ENCODE measurements at regions of chr5 and their contacts with region 1.

Region 1: DNA sequence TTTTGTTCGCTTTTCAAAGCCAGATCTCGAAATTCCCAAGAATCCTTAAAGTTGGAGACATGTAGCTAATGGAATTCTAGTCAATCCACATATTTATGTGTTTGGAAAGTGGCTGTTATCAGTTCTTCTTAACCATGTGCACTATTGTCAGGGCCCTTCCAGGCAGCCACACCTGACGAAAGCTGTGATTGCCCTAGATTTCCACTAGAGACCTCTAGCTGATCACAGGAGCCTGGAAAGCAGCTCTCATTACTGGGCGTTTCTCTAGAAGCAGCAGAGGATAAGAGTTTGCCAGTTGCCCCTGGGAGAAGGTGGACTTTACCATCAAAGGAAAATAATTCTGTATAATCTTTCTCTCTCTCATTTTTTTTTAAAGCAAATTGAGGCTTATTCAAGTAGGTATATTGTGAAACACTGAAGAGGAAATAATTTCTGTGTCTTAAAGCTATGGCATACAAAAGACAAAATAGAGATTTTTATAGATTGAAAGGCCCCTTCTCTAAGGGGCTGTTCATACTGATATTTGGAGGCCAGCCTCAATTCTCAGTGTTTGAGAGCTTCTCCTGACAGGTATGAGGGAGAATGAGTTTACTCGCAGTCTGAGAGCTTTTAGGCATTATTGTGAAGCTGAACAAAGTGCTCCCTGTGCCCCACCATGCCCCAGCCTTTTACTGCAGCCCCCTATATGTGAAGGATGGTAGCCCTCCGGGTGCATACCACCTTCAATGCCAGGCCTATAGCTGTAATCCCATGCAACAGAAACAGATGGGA is 405.4 kb upstream of the ACTBL2 start:
- DNase-seq: peak; percentile 73
- H3K4me3 ChIP-seq: no peak overlapping the region
- H3K27ac ChIP-seq: no peak overlapping the region
- H3K4me1 ChIP-seq: no peaks in the 10 kb centered on the region
- H3K27me3 ChIP-seq: no peaks in the 10 kb centered on the region
- CTCF ChIP-seq: peak; percentile 53 to 66
- POLR2A ChIP-seq: no peak

Region 2: GRCh38 chr5:57841676-57842363 is 46.2 kb before region 1 on chr5:
- CTCF ChIA-PET with region 1: interaction called, 7 read pairs
- POLR2A ChIA-PET with region 1: no interaction called
- dilution Hi-C with region 1: no loop called
- intact Hi-C with region 1: loop called (anchors 2 kb)
- DNase-seq: peak; percentile 96
- H3K4me3 ChIP-seq: no peak overlapping the region
- H3K27ac ChIP-seq: peak overlapping the region; percentile 90
- H3K4me1 ChIP-seq: peaks cover 66% of the 10 kb centered on the region
- H3K27me3 ChIP-seq: no peaks in the 10 kb centered on the region
- CTCF ChIP-seq: no peak
- POLR2A ChIP-seq: no peak

Region 3: GRCh38 chr5:58188262-58188651 is 300.2 kb after region 1 on chr5:
- CTCF ChIA-PET with region 1: interaction called, 14 read pairs
- POLR2A ChIA-PET with region 1: no interaction called
- dilution Hi-C with region 1: no loop called
- intact Hi-C with region 1: no loop called
- DNase-seq: peak; percentile 75
- H3K4me3 ChIP-seq: no peak overlapping the region
- H3K27ac ChIP-seq: peak overlapping the region; percentile 39
- H3K4me1 ChIP-seq: peaks cover 18% of the 10 kb centered on the region
- H3K27me3 ChIP-seq: no peaks in the 10 kb centered on the region
- CTCF ChIP-seq: no peak
- POLR2A ChIP-seq: no peak

Region 4: DNA sequence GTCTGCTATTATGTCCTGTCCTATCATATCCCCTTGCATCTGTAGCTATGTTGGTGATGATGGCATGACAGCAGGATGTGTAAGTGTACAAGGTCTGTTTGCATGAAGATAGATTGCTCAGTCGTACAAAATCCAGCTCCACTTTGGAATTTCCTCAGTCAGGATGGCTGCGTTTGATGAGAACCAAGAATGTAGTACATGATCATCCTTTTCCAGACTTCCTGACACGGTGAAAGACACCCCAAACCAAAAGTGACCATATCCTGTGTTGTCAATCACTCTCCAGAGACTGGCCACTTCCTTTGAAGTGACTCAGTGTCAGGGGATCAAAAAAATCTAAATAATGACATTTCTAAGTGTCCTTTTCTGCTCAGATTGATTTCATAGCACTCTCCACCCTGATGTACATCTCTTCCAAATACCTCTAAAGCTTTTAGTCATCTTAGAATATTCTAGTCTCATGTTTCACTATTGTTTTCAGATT is 358.5 kb after region 1 on chr5:
- CTCF ChIA-PET with region 1: interaction called, 8 read pairs
- POLR2A ChIA-PET with region 1: no interaction called
- dilution Hi-C with region 1: no loop called
- intact Hi-C with region 1: loop called (anchors 1 kb)
- DNase-seq: peak; percentile 51
- H3K4me3 ChIP-seq: no peak overlapping the region
- H3K27ac ChIP-seq: peak overlapping the region; percentile 77
- H3K4me1 ChIP-seq: peaks cover 54% of the 10 kb centered on the region
- H3K27me3 ChIP-seq: no peaks in the 10 kb centered on the region
- CTCF ChIP-seq: no peak
- POLR2A ChIP-seq: no peak

Region 5: GRCh38 chr5:58273711-58274110 is 385.7 kb after region 1 on chr5:
- CTCF ChIA-PET with region 1: interaction called, 10 read pairs
- POLR2A ChIA-PET with region 1: no interaction called
- dilution Hi-C with region 1: no loop called
- intact Hi-C with region 1: no loop called
- DNase-seq: no peak
- H3K4me3 ChIP-seq: no peak overlapping the region
- H3K27ac ChIP-seq: peak overlapping the region; percentile 42
- H3K4me1 ChIP-seq: peaks cover 12% of the 10 kb centered on the region
- H3K27me3 ChIP-seq: no peaks in the 10 kb centered on the region
- CTCF ChIP-seq: no peak
- POLR2A ChIP-seq: no peak

Region 6: DNA sequence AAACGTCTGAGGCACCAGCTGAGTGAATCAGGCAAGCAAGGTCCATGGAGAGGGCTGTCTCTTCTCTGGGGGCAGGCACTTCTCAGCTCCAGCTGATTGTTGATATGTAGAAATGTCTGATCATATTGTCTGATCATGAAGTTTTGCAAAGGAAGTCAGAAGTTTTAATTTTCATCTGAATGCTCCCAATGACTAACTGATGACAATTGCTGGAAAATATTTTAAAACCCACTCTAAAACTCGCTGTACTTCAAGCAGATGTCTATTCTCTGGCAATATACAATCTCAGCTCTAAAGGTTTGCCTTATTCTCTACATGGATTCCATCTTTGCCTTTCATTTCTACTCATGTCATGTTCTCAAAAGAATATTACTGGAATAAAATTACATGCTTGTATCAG is 559.2 kb after region 1 on chr5:
- CTCF ChIA-PET with region 1: interaction called, 20 read pairs
- POLR2A ChIA-PET with region 1: interaction called, 3 read pairs
- dilution Hi-C with region 1: no loop called
- intact Hi-C with region 1: no loop called
- DNase-seq: no peak
- H3K4me3 ChIP-seq: no peak overlapping the region
- H3K27ac ChIP-seq: no peak overlapping the region
- H3K4me1 ChIP-seq: no peaks in the 10 kb centered on the region
- H3K27me3 ChIP-seq: no peaks in the 10 kb centered on the region
- CTCF ChIP-seq: no peak
- POLR2A ChIP-seq: no peak

Region 7: DNA sequence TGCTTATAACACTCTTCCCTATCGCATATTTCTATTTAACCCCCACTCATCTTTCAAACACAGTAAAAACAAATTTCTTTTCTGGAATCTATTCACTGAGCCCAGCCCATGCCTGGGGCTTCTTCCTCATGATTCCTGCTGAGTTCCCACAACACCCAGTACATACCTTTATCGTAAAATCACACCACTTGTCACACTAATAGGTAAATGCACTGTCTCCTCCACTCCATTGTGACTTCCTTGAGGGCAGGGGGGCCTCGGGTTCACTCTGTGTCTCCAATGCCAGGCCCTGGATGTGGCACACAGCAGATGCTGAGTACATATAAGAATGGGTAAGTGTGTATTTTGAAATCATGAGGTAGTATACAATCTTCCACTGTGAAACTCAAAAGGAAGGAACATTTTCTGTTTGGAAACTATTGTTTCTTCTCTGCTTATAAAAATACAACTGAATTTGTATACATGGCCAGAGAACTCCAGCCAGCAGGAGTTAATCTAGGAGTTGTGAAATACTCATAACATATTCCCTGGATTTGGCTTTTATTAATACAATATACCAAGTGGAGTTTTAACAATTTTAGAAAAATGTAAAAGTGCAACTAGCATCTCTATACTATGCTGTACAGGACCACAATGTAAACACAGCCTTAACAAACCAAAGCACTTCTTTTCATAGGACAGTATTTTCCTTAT is 564.7 kb after region 1 on chr5:
- CTCF ChIA-PET with region 1: interaction called, 20 read pairs
- POLR2A ChIA-PET with region 1: interaction called, 3 read pairs
- dilution Hi-C with region 1: no loop called
- intact Hi-C with region 1: no loop called
- DNase-seq: peak; percentile 55
- H3K4me3 ChIP-seq: no peak overlapping the region
- H3K27ac ChIP-seq: no peak overlapping the region
- H3K4me1 ChIP-seq: peaks cover 32% of the 10 kb centered on the region
- H3K27me3 ChIP-seq: no peaks in the 10 kb centered on the region
- CTCF ChIP-seq: no peak
- POLR2A ChIP-seq: no peak